ENCODE measurements at regions of chr9 and their contacts with region 1.

Region 1: GRCh38 chr9:6080154-6080716 is 64.8 kb upstream of the RANBP6 start:
- DNase-seq: peak; percentile 92 to 99
- H3K4me3 ChIP-seq: peak overlapping the region in 3 of 4 experiments; percentile 15 to 49 (median 41); a peak in 4 of 8 replicates
- H3K27ac ChIP-seq: 0 out of 2 replicates have a peak overlapping the region, but pooled peaks have one; percentile 46
- H3K4me1 ChIP-seq: peaks cover 0 to 12% (median 5%) of the 10 kb centered on the region in 4 experiments; a peak in 3 of 7 replicates
- H3K27me3 ChIP-seq: no peaks in the 10 kb centered on the region
- CTCF ChIP-seq: peak in 2 of 3 experiments; percentile 0 to 16; a peak in 2 of 4 replicates
- EP300 ChIP-seq: no peak
- POLR2A ChIP-seq: peak in 1 of 2 experiments; percentile 86; a peak in 2 of 3 replicates
- RAD21 ChIP-seq: peak in 1 of 2 experiments; percentile 5; a peak in 1 of 4 replicates

Region 2: GRCh38 chr9:6096821-6097220 is 16.6 kb after region 1 on chr9:
- CTCF ChIA-PET with region 1: no interaction called
- POLR2A ChIA-PET with region 1: interaction called, 10 read pairs
- DNase-seq: no peak
- H3K4me3 ChIP-seq: no peak overlapping the region
- H3K27ac ChIP-seq: no peak overlapping the region
- H3K4me1 ChIP-seq: no peaks in the 10 kb centered on the region
- H3K27me3 ChIP-seq: no peaks in the 10 kb centered on the region
- CTCF ChIP-seq: no peak
- EP300 ChIP-seq: no peak
- POLR2A ChIP-seq: no peak
- RAD21 ChIP-seq: no peak